ENCODE measurements at regions of chr1 and their contacts with region 1.

Region 1: DNA sequence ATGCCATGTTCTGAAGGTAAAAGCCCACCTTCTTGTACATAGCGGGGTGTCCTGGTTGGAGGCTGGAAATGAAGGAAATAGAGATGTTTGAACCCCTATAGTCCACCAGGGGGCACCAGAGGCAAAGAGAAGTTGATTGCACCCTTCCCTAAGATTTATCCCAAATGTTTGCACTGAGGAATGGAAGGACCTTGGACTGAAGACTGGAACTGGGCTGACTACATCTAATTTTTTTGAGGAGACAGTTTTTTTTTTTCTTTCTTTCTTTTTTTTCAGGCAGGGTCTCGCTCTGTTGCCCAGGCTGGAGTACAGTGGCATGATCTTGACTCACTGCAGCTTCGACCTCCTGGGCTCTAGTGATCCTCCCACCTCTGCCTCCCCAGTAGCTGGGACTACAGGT is 55.3 kb upstream of the EIF4G3 start:
- H3K4me3 ChIP-seq: no peak overlapping the region
- H3K27ac ChIP-seq: no peak overlapping the region
- H3K4me1 ChIP-seq: no peaks in the 10 kb centered on the region
- CTCF ChIP-seq: peak; percentile 59; the same call in 1 of the 2 replicates

Region 2: GRCh38 chr1:20896871-20897223 is 335.2 kb before region 1 on chr1:
- CTCF ChIA-PET with region 1: no interaction called
- POLR2A ChIA-PET with region 1: no interaction called
- H3K4me3 ChIP-seq: no peak overlapping the region
- H3K27ac ChIP-seq: no peak overlapping the region
- H3K4me1 ChIP-seq: no peaks in the 10 kb centered on the region
- CTCF ChIP-seq: no peak

Region 3: DNA sequence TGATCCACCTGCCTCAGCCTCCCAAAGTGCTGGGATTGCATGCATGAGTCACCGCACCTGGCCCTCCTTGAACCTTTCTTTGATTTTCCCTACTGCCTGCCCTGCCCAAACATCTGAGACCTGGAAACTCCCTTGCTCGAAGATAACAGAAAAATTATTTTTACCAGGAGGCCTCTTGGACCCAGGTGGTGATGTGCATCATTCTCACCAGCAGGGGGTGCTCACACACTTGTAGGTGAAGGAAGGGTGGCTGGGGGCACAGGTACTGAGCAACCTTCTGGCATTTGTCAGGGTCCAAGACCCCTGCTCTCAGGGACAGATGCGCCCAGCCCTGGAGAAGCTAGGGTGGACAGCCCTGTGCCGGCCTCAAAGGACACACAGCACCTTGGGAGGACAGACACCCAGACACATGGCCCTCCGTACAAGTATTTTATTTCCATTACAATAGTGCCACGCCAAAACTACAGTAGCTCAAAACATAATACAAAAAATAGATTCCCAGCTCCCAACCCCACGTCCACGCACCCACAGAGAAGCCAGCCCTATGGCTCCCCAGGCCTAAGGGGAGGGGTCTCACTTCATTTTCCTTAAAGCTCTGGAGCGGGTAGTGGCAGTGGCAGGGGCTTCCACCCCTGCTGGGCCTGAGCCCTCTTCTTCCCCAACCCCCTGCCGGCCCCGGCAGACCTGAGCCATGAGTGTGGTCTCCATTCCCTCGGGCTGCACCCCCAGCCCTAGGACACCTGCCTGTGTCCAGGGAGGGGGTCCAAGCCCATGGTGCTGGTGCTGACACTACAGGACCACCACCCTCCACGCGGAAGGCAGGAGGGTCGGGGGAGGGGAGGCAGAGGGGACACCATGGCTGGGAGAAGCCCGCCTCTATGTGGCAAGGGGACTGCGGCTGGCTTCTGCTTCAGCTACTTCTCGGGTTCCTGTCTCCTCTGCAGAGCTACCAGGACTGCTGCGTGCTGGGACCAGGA is 14.9 kb before region 1 on chr1:
- CTCF ChIA-PET with region 1: interaction called, 41 read pairs
- POLR2A ChIA-PET with region 1: no interaction called
- H3K4me3 ChIP-seq: no peak overlapping the region
- H3K27ac ChIP-seq: no peak overlapping the region
- H3K4me1 ChIP-seq: no peaks in the 10 kb centered on the region
- CTCF ChIP-seq: peak; percentile 36; the same call in 1 of the 2 replicates

Region 4: DNA sequence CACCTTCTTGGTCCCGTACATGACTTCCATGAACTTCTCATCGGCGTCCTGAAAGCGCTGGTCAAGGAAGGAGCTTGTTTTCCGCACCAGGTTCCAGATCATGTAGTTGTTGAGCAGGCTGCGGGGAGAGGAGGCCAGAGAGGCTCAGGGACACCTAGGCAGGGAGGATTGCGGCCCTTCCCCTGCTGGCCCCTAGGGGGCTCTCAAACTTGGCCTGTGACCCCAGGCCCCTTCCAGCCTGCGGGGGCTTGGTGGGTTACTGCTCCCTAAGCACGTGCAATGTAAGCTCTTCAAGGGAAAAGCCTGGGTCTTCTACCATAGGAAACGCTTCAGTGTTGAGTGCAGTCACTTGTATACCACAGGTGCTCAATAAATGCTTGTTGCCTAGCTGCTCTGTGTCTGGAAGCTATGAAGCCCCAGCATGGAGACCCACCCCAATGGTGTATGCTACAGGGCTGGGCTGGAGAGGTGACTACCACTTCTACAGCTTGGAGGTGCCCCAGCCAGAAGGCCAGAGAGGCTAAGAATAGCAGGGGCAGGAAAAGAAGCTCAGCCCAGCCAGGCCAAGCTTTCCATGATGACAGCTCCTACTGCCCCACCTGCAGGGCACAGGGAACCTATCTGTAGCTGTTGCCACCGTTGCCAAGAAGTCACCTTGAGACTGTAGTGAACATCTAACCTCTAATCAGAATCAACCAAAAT is 13.1 kb after region 1 on chr1:
- CTCF ChIA-PET with region 1: interaction called, 32 read pairs
- POLR2A ChIA-PET with region 1: no interaction called
- H3K4me3 ChIP-seq: no peak overlapping the region
- H3K27ac ChIP-seq: no peak overlapping the region
- H3K4me1 ChIP-seq: no peaks in the 10 kb centered on the region
- CTCF ChIP-seq: no peak

Region 5: GRCh38 chr1:21255278-21255942 is 23.4 kb after region 1 on chr1:
- CTCF ChIA-PET with region 1: interaction called, 54 read pairs
- POLR2A ChIA-PET with region 1: no interaction called
- H3K4me3 ChIP-seq: no peak overlapping the region
- H3K27ac ChIP-seq: no peak overlapping the region
- H3K4me1 ChIP-seq: no peaks in the 10 kb centered on the region
- CTCF ChIP-seq: peak; percentile 80

Region 6: DNA sequence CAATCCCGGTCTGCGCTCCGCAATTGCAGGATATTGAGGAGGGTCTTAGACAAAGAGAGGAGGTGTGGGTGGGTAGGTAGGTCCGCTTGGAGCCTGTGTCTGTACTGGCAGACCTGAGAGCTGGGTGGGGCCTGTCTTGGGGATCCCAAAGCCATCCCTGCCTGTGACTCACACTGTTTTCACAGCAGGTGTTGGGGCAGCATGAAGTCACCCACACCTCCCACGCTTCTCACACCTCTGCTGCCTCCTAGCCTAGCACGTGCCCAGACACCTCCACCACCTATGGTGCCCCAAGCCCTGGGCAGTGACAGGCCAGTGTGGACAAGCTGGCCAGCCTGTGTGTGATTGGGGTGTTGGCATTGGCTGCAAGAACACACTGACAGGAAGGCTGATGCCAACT is 123.9 kb after region 1 on chr1:
- CTCF ChIA-PET with region 1: interaction called, 21 read pairs
- POLR2A ChIA-PET with region 1: no interaction called
- H3K4me3 ChIP-seq: no peak overlapping the region
- H3K27ac ChIP-seq: no peak overlapping the region
- H3K4me1 ChIP-seq: no peaks in the 10 kb centered on the region
- CTCF ChIP-seq: no peak

Region 7: DNA sequence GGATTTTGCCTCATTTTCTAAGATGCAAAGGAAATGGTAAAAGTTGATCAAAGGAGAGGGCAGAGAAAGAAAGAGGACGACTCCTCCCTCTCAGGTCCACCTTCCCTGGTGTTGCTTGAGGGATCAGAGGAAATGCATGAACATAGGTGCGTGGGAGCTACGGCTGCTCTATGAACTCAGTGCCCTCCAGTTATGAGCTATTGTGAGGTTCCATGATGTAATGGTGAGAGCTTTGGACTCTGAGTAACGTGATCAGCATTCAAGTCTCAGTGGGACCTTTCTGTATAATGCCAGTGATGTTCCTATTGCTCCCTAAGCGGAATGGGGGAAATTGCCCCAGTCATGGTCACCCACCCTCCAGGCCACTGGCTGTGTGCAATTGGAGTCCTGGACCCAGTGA is 182.0 kb after region 1 on chr1:
- CTCF ChIA-PET with region 1: no interaction called
- POLR2A ChIA-PET with region 1: no interaction called
- H3K4me3 ChIP-seq: no peak overlapping the region
- H3K27ac ChIP-seq: no peak overlapping the region
- H3K4me1 ChIP-seq: no peaks in the 10 kb centered on the region
- CTCF ChIP-seq: no peak

Measured in HEK293 (cell line).